Left ventricle myocardium superior (tissue), 1 donor: ENCODE measurements at regions of chr11 and their contacts with region 1.

Region 1: GRCh38 chr11:75388386-75389275 is 10.7 kb upstream of the RPS3 start:
- DNase-seq: peak; percentile 65
- ATAC-seq: peak; percentile 75

Region 2: GRCh38 chr11:75280227-75280701 is 108.4 kb before region 1 on chr11:
- intact Hi-C with region 1: loop called (anchors 5 kb)
- DNase-seq: peak; percentile 83
- ATAC-seq: peak; percentile 87

Region 3: GRCh38 chr11:75532200-75533048 is 143.8 kb after region 1 on chr11:
- intact Hi-C with region 1: loop called (anchors 2 kb)
- DNase-seq: peak; percentile 69
- ATAC-seq: peak; percentile 56

Region 4: DNA sequence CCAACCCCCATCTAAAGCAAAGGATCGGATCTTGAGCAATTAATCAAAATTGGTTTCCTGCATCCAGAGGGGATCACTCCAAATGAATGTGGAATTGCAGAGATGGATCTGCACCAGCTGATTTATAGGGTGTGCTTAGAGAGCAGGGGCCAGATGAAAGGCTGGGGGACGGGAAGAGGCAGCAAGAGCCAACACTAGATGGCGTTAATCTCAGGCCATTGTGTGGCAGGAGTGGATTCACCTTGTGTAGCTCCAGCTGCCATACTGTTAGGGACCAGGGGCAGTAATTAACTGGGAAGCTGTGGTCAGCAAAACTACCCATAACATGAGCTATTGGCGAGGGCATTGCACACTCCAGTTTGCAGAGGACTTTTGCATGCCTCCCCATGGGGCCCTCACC is 209.0 kb after region 1 on chr11:
- intact Hi-C with region 1: no loop called
- DNase-seq: no peak
- ATAC-seq: peak; percentile 38